ENCODE measurements at regions of chr10 and their contacts with region 1.

Region 1: DNA sequence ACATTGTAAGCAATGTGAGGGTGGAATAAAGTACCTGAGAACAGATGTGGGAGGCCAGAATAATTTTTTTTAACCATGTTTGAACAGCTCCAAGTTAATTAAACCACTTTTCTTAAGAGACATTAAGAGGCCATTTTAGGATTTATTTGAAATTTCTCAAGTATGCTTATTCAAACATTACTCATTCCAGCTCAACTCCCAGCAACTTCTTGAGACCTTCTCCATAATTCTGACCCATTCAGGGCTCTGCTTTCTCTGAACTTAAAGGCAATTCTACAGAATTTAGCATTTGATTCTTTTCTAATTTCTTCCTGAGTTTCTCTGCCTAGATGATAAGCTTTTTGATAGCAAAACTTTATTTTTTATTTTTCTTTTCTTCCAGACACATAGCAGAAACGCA is 314.5 kb downstream of the CAMK1D start:
- H3K4me3 ChIP-seq: no peak overlapping the region
- H3K27ac ChIP-seq: no peak overlapping the region
- H3K4me1 ChIP-seq: no peaks in the 10 kb centered on the region
- CTCF ChIP-seq: no peak

Region 2: DNA sequence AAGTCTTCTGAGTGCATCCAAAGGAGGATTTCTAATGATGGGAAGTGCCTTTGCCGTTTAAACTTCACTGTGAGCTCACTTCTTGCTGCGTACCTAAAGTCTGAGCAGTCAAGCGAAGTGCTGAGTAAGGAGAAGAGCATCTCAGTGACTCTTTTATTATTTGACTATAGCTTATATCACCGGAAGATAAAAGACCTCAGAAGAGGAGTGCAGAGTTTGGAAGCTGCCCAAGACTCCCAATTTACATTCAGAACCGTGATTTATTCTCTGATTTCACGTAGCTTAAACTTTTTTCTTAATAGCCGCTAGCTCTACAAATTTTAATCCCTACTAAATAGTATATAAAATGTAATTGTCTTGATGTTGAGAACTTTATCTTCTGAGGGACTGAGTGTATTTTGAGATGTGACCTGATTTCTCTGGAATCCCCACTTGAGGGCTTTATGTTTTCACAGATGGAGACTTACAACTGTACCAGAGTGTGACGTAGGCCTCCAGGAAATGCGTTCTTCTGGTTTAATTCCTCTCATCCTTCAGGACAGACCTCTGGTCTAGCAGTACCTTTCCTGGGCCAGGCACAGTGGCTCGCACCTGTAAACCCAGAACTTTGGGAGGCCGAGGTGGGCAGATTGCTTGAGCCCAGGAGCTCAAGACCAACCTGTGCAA is 263.5 kb before region 1 on chr10:
- CTCF ChIA-PET with region 1: no interaction called
- POLR2A ChIA-PET with region 1: no interaction called
- H3K4me3 ChIP-seq: no peak overlapping the region
- H3K27ac ChIP-seq: no peak overlapping the region
- H3K4me1 ChIP-seq: peaks cover 13% of the 10 kb centered on the region
- CTCF ChIP-seq: no peak

Region 3: GRCh38 chr10:12579954-12580858 is 83.7 kb before region 1 on chr10:
- CTCF ChIA-PET with region 1: interaction called, 10 read pairs
- POLR2A ChIA-PET with region 1: no interaction called
- H3K4me3 ChIP-seq: no peak overlapping the region
- H3K27ac ChIP-seq: no peak overlapping the region
- H3K4me1 ChIP-seq: no peaks in the 10 kb centered on the region
- CTCF ChIP-seq: no peak